ENCODE measurements at regions of chr6 and their contacts with region 1.

Region 1: DNA sequence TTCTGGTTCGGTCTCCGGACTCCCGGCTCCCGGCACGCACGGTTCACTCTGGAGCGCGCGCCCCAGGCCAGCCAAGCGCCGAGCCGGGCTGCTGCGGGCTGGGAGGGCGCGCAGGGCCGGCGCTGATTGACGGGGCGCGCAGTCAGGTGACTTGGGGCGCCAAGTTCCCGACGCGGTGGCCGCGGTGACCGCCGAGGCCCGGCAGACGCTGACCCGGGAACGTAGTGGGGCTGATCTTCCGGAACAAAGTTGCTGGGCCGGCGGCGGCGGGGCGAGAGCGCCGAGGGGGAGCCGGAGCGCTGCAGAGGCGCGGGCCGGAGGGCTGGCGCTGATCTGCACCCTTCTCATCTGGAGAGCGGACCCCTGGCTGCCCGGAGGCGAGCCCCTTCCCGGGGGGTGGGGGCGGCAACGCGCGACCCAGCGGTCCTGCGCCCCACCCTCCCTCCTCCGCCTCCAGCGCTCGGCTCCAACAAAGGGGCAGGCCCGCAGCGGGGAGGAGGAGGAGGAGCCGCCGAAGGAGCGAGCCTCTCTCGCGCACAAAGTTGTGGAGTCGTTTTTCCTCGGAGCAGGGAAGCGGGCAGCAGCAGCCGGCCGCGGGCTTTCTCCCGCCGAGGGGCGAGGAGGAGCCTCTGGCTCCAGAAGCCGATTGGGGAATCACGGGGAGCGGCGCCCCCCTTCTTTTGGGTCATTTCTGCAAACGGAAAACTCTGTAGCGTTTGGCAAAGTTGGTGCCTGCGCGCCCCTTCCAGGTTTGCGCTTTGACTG is at the start of gene UTRN:
- DNase-seq: peak; percentile 46 to 55
- ATAC-seq: peak; percentile 54 to 72 (median 69)
- H3K4me3 ChIP-seq: peak within 1 kb of the TSS; percentile 62
- H3K4me3 Mint-ChIP-seq: peak within 1 kb of the TSS; percentile 100
- H3K27ac ChIP-seq: peak within 1 kb of the TSS; percentile 51
- H3K27ac Mint-ChIP-seq: peak within 1 kb of the TSS; percentile 91 to 92
- H3K4me1 ChIP-seq: peaks cover 13% of the 10 kb centered on the region
- H3K4me1 Mint-ChIP-seq: peaks cover 42 to 48% of the 10 kb centered on the region in 2 donors
- H3K27me3 ChIP-seq: no peaks in the 10 kb centered on the region
- H3K27me3 Mint-ChIP-seq: no peaks in the 10 kb centered on the region
- CTCF ChIP-seq: no peak
- total RNA-seq, gene UTRN: 584 to 715 (median 591) TPM

Region 2: GRCh38 chr6:144104898-144105487 is 180.0 kb before region 1 on chr6:
- intact Hi-C with region 1: loop called (anchors 10 kb)
- DNase-seq: peak in 1 of 2 donors; percentile 85
- ATAC-seq: peak; percentile 79 to 88 (median 87)
- H3K4me3 ChIP-seq: no peak overlapping the region
- H3K4me3 Mint-ChIP-seq: no peak overlapping the region
- H3K27ac ChIP-seq: no peak overlapping the region
- H3K27ac Mint-ChIP-seq: peak overlapping the region in 1 of 2 donors; percentile 32
- H3K4me1 ChIP-seq: no peaks in the 10 kb centered on the region
- H3K4me1 Mint-ChIP-seq: peaks cover 5% of the 10 kb centered on the region in 2 donors
- H3K27me3 ChIP-seq: no peaks in the 10 kb centered on the region
- H3K27me3 Mint-ChIP-seq: no peaks in the 10 kb centered on the region
- CTCF ChIP-seq: peak; percentile 94

Region 3: GRCh38 chr6:144305985-144306384 is 21.0 kb after region 1 on chr6:
- intact Hi-C with region 1: loop called (anchors 2 kb)
- DNase-seq: peak; percentile 54 to 74
- ATAC-seq: peak; percentile 66 to 82 (median 77)
- H3K4me3 ChIP-seq: no peak overlapping the region
- H3K4me3 Mint-ChIP-seq: peak overlapping the region; percentile 85
- H3K27ac ChIP-seq: peak overlapping the region; percentile 80
- H3K27ac Mint-ChIP-seq: peak overlapping the region; percentile 89 to 95
- H3K4me1 ChIP-seq: peaks cover 35% of the 10 kb centered on the region
- H3K4me1 Mint-ChIP-seq: peaks cover 72 to 73% of the 10 kb centered on the region in 2 donors
- H3K27me3 ChIP-seq: no peaks in the 10 kb centered on the region
- H3K27me3 Mint-ChIP-seq: no peaks in the 10 kb centered on the region
- CTCF ChIP-seq: no peak

Region 4: GRCh38 chr6:144334131-144334708 is 49.3 kb after region 1 on chr6:
- intact Hi-C with region 1: loop called (anchors 2 kb)
- DNase-seq: peak; percentile 67 to 89
- ATAC-seq: peak; percentile 85 to 91 (median 88)
- H3K4me3 ChIP-seq: peak overlapping the region; percentile 15
- H3K4me3 Mint-ChIP-seq: peak overlapping the region; percentile 87
- H3K27ac ChIP-seq: peak overlapping the region; percentile 73
- H3K27ac Mint-ChIP-seq: peak overlapping the region; percentile 97 to 99
- H3K4me1 ChIP-seq: peaks cover 41% of the 10 kb centered on the region
- H3K4me1 Mint-ChIP-seq: peaks cover 83 to 84% of the 10 kb centered on the region in 2 donors
- H3K27me3 ChIP-seq: no peaks in the 10 kb centered on the region
- H3K27me3 Mint-ChIP-seq: no peaks in the 10 kb centered on the region
- CTCF ChIP-seq: no peak

Region 5: GRCh38 chr6:144349690-144350527 is 64.9 kb after region 1 on chr6:
- intact Hi-C with region 1: loop called (anchors 5 kb)
- DNase-seq: peak in 1 of 2 donors; percentile 60
- ATAC-seq: peak; percentile 32 to 62 (median 32)
- H3K4me3 ChIP-seq: peak overlapping the region; percentile 17
- H3K4me3 Mint-ChIP-seq: peak overlapping the region; percentile 92
- H3K27ac ChIP-seq: peak overlapping the region; percentile 87
- H3K27ac Mint-ChIP-seq: peak overlapping the region; percentile 90 to 99
- H3K4me1 ChIP-seq: peaks cover 83% of the 10 kb centered on the region
- H3K4me1 Mint-ChIP-seq: peaks cover 81 to 90% of the 10 kb centered on the region in 2 donors
- H3K27me3 ChIP-seq: no peaks in the 10 kb centered on the region
- H3K27me3 Mint-ChIP-seq: no peaks in the 10 kb centered on the region
- CTCF ChIP-seq: no peak

Region 6: DNA sequence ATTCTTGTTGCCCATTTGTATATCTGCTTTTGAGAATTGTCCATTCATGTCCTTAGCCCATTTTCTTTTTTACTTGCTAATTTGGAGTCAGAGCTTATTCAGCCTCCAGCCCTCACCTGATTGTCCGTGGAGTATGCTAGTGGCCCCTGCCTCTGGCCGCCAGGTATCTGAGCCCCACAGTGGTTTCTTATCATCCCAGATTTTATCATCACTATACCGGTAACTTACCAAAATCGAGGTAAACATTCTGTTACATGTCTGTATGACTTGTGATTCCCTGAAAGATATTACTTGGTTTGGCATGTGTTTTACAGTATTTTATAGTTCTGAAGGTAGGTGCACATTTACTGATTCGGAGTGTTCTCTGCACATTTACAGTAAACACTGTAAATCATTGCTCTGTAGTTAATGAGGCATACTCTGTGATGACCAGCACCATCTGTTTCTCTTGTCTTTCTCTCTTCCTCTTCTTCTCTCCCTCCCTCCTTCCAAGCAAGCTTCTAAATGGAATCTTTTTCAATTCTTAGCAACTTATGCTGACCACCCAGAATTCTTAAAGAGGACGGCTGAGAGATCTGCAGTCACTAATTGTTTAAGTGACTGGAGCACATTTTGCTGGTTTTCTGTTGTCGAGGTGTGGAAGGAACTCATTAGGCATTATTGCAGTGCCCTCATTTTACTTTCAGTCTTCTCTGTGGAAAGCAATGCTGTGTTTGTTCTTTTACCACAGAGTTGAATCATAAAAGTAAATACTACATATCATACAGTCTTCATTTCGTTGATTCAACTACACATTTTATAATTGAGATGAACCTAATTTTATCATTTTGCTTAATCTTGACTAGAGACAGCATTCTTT is 126.6 kb after region 1 on chr6:
- intact Hi-C with region 1: loop called (anchors 5 kb)
- DNase-seq: peak in 1 of 2 donors; percentile 28
- ATAC-seq: peak; percentile 46 to 59 (median 54)
- H3K4me3 ChIP-seq: no peak overlapping the region
- H3K4me3 Mint-ChIP-seq: peak overlapping the region; percentile 83
- H3K27ac ChIP-seq: no peak overlapping the region
- H3K27ac Mint-ChIP-seq: peak overlapping the region; percentile 84 to 91
- H3K4me1 ChIP-seq: peaks cover 26% of the 10 kb centered on the region
- H3K4me1 Mint-ChIP-seq: peaks cover 81 to 86% of the 10 kb centered on the region in 2 donors
- H3K27me3 ChIP-seq: no peaks in the 10 kb centered on the region
- H3K27me3 Mint-ChIP-seq: no peaks in the 10 kb centered on the region
- CTCF ChIP-seq: no peak

Region 7: DNA sequence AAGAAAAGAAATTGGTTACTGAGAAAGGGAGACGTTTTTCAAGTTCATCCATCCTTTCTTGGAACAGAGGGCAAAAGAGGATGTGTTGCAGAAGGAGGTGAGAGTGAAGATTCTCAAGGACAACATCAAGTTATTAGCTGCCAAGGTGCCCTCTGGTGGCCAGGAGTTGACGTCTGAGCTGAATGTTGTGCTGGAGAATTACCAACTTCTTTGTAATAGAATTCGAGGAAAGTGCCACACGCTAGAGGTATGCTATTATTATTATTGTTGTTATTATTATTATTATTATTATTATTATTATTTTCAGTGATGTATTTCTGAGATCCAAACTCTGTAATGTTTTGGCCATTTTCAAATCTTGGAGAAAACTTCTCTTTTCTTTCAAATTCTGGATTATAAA is 197.2 kb after region 1 on chr6:
- intact Hi-C with region 1: loop called (anchors 1 kb)
- DNase-seq: peak; percentile 54 to 83
- ATAC-seq: peak; percentile 56 to 86 (median 78)
- H3K4me3 ChIP-seq: no peak overlapping the region
- H3K4me3 Mint-ChIP-seq: no peak overlapping the region
- H3K27ac ChIP-seq: no peak overlapping the region
- H3K27ac Mint-ChIP-seq: peak overlapping the region; percentile 56 to 72
- H3K4me1 ChIP-seq: no peaks in the 10 kb centered on the region
- H3K4me1 Mint-ChIP-seq: peaks cover 19 to 37% of the 10 kb centered on the region in 2 donors
- H3K27me3 ChIP-seq: no peaks in the 10 kb centered on the region
- H3K27me3 Mint-ChIP-seq: no peaks in the 10 kb centered on the region
- CTCF ChIP-seq: peak; percentile 71

Region 8: GRCh38 chr6:144726129-144726522 is 441.2 kb after region 1 on chr6:
- intact Hi-C with region 1: no loop called
- DNase-seq: peak; percentile 27 to 33
- ATAC-seq: peak; percentile 83 to 96 (median 92)
- H3K4me3 ChIP-seq: no peak overlapping the region
- H3K4me3 Mint-ChIP-seq: peak overlapping the region; percentile 42
- H3K27ac ChIP-seq: no peak overlapping the region
- H3K27ac Mint-ChIP-seq: peak overlapping the region; percentile 10 to 51
- H3K4me1 ChIP-seq: peaks cover 8% of the 10 kb centered on the region
- H3K4me1 Mint-ChIP-seq: peaks cover 49 to 53% of the 10 kb centered on the region in 2 donors
- H3K27me3 ChIP-seq: no peaks in the 10 kb centered on the region
- H3K27me3 Mint-ChIP-seq: no peaks in the 10 kb centered on the region
- CTCF ChIP-seq: no peak